Naive thymus-derived CD4-positive, alpha-beta T cell (primary cell): ENCODE measurements at regions of chr4 and their contacts with region 1.

Region 1: GRCh38 chr4:78656968-78657445 is 105.4 kb downstream of the ANXA3 start:
- DNase-seq: peak in 8 of 9 donors; percentile 25 to 45 (median 37)
- ATAC-seq: peak; percentile 59
- H3K4me3 ChIP-seq: peak overlapping the region; percentile 14
- H3K4me3 Mint-ChIP-seq: peak overlapping the region; percentile 69 to 90 (median 76)
- H3K27ac ChIP-seq: peak overlapping the region; percentile 28
- H3K27ac Mint-ChIP-seq: peak overlapping the region; percentile 19 to 79 (median 72)
- H3K4me1 ChIP-seq: peaks cover 8 to 31% of the 10 kb centered on the region in 2 donors
- H3K4me1 Mint-ChIP-seq: peaks cover 35 to 49% (median 47%) of the 10 kb centered on the region in 7 donors
- H3K27me3 ChIP-seq: no peaks in the 10 kb centered on the region
- H3K27me3 Mint-ChIP-seq: no peaks in the 10 kb centered on the region

Region 2: GRCh38 chr4:78612398-78613178 is 44.4 kb before region 1 on chr4:
- CTCF ChIA-PET with region 1: no interaction called
- POLR2A ChIA-PET with region 1: no interaction called
- intact Hi-C with region 1: loop called (anchors 1 to 5 kb)
- DNase-seq: no peak
- ATAC-seq: peak; percentile 47
- H3K4me3 ChIP-seq: no peak overlapping the region
- H3K4me3 Mint-ChIP-seq: peak overlapping the region in 1 of 10 donors; percentile 39
- H3K27ac ChIP-seq: no peak overlapping the region
- H3K27ac Mint-ChIP-seq: peak overlapping the region in 4 of 9 donors; percentile 16 to 66 (median 57)
- H3K4me1 ChIP-seq: peaks cover 0 to 36% of the 10 kb centered on the region in 2 donors
- H3K4me1 Mint-ChIP-seq: peaks cover 13 to 76% (median 55%) of the 10 kb centered on the region in 7 donors
- H3K27me3 ChIP-seq: no peaks in the 10 kb centered on the region
- H3K27me3 Mint-ChIP-seq: no peaks in the 10 kb centered on the region

Region 3: DNA sequence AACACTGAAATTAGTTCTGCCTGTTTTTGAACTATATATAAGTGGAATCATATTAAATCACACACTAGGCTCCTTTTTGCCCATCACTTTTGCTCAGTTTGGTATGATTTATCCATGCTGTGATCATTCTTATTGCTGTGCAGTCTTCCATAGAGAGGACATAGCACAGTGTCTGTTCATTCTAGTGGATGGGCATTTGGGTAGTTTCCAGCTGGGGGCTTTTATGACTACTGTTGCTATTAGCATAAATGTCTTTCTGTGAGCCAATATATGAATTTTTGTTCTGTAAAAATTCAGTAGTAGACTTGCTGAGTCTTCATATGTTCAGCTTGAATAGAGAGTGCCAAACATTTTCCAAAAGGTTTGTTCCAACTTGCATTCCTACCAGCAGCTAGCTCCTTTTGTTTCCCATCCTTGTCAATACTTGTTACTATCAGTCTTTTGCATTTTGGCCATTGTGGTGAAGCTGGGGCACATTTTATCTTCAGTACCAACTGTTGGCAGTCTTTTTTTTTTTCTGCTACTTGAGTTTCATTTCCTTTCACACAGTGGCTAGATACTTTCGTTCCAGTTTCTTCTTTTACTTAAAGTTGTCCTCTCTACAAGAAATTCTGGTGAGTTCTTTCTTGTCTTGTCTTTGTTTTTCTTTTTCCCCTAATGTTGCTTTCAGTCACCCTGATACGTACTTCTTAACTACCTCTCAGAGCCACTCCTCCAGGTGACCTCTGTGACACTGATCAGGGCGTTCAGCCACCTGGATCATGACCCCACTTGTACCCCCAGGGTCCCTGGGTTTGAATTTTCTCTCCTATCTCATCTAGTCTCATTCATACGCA is 18.5 kb before region 1 on chr4:
- CTCF ChIA-PET with region 1: interaction called, 8 read pairs
- POLR2A ChIA-PET with region 1: interaction called, 5 read pairs
- intact Hi-C with region 1: loop called in 1 of 2 experiments (anchors 2 kb)
- DNase-seq: no peak
- ATAC-seq: no peak
- H3K4me3 ChIP-seq: no peak overlapping the region
- H3K4me3 Mint-ChIP-seq: peak overlapping the region in 4 of 10 donors; percentile 3 to 55 (median 12)
- H3K27ac ChIP-seq: no peak overlapping the region
- H3K27ac Mint-ChIP-seq: peak overlapping the region in 6 of 9 donors; percentile 17 to 85 (median 74)
- H3K4me1 ChIP-seq: no peaks in the 10 kb centered on the region
- H3K4me1 Mint-ChIP-seq: peaks cover 7 to 41% (median 12%) of the 10 kb centered on the region in 7 donors
- H3K27me3 ChIP-seq: no peaks in the 10 kb centered on the region
- H3K27me3 Mint-ChIP-seq: peaks cover 0 to 5% (median 0%) of the 10 kb centered on the region in 5 donors

Region 4: GRCh38 chr4:78644744-78645330 is 12.2 kb before region 1 on chr4:
- CTCF ChIA-PET with region 1: interaction called, 8 read pairs
- POLR2A ChIA-PET with region 1: interaction called, 5 read pairs
- intact Hi-C with region 1: loop called in 1 of 2 experiments (anchors 1 kb)
- DNase-seq: peak in 7 of 9 donors; percentile 21 to 64 (median 55)
- ATAC-seq: peak; percentile 95
- H3K4me3 ChIP-seq: no peak overlapping the region
- H3K4me3 Mint-ChIP-seq: peak overlapping the region in 1 of 10 donors; percentile 8
- H3K27ac ChIP-seq: no peak overlapping the region
- H3K27ac Mint-ChIP-seq: peak overlapping the region in 1 of 9 donors; percentile 28
- H3K4me1 ChIP-seq: no peaks in the 10 kb centered on the region
- H3K4me1 Mint-ChIP-seq: peaks cover 5 to 31% (median 13%) of the 10 kb centered on the region in 7 donors
- H3K27me3 ChIP-seq: no peaks in the 10 kb centered on the region
- H3K27me3 Mint-ChIP-seq: no peaks in the 10 kb centered on the region

Region 5: DNA sequence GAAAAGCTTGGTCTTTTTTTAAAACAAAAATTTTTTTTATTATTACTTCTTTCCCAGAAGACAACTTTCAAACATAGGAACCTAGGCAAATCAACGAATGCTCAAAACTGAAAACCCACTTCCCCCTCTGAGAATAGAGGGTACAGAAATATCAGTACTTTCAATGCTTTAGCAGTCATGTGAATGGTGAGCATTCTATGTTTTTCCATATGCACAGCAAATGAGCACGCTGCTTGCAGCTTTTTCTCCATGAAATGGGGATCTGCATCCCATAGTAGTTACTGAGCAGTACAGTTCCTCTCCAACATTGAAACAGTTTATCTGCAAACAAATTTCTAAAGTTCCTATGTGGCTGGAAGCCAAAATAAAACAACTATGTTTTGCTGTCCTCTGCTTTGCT is 10.8 kb after region 1 on chr4:
- CTCF ChIA-PET with region 1: no interaction called
- POLR2A ChIA-PET with region 1: no interaction called
- intact Hi-C with region 1: loop called in 1 of 2 experiments (anchors 1 kb)
- DNase-seq: no peak
- ATAC-seq: no peak
- H3K4me3 ChIP-seq: no peak overlapping the region
- H3K4me3 Mint-ChIP-seq: peak overlapping the region in 1 of 10 donors; percentile 19
- H3K27ac ChIP-seq: no peak overlapping the region
- H3K27ac Mint-ChIP-seq: peak overlapping the region in 1 of 9 donors; percentile 2
- H3K4me1 ChIP-seq: no peaks in the 10 kb centered on the region
- H3K4me1 Mint-ChIP-seq: peaks cover 10 to 29% (median 24%) of the 10 kb centered on the region in 7 donors
- H3K27me3 ChIP-seq: no peaks in the 10 kb centered on the region
- H3K27me3 Mint-ChIP-seq: no peaks in the 10 kb centered on the region

Region 6: GRCh38 chr4:78682070-78682469 is 25.1 kb after region 1 on chr4:
- CTCF ChIA-PET with region 1: no interaction called
- POLR2A ChIA-PET with region 1: no interaction called
- intact Hi-C with region 1: no loop called
- DNase-seq: no peak
- ATAC-seq: no peak
- H3K4me3 ChIP-seq: no peak overlapping the region
- H3K4me3 Mint-ChIP-seq: no peak overlapping the region
- H3K27ac ChIP-seq: no peak overlapping the region
- H3K27ac Mint-ChIP-seq: peak overlapping the region in 1 of 9 donors; percentile 28
- H3K4me1 ChIP-seq: no peaks in the 10 kb centered on the region
- H3K4me1 Mint-ChIP-seq: no peaks in the 10 kb centered on the region
- H3K27me3 ChIP-seq: no peaks in the 10 kb centered on the region
- H3K27me3 Mint-ChIP-seq: no peaks in the 10 kb centered on the region

Region 7: DNA sequence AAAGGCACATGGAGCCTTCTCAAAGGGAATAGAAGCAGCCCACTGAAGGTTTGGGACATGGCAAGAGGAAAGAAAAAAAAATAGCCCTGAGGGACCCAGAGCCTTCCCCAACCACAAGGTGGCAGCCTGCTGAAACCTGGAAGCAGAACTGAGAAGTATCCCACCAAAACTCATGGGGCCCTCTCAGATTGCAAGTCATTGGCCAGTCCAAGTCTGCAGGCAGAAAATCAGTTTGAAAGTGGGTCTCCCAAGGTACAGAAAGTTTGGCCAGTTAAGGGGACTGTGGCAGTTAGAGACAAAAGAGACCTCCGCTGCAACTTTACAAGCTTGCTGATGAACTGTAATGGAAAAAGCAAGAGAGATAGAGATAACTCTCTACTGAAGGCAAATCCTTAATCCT is 1260.2 kb after region 1 on chr4:
- CTCF ChIA-PET with region 1: no interaction called
- POLR2A ChIA-PET with region 1: no interaction called
- intact Hi-C with region 1: no loop called
- DNase-seq: peak in 7 of 9 donors; percentile 10 to 43 (median 22)
- ATAC-seq: peak; percentile 62
- H3K4me3 ChIP-seq: no peak overlapping the region
- H3K4me3 Mint-ChIP-seq: no peak overlapping the region
- H3K27ac ChIP-seq: no peak overlapping the region
- H3K27ac Mint-ChIP-seq: no peak overlapping the region
- H3K4me1 ChIP-seq: no peaks in the 10 kb centered on the region
- H3K4me1 Mint-ChIP-seq: peaks cover 0 to 16% (median 6%) of the 10 kb centered on the region in 7 donors
- H3K27me3 ChIP-seq: no peaks in the 10 kb centered on the region
- H3K27me3 Mint-ChIP-seq: no peaks in the 10 kb centered on the region